ENCODE measurements at regions of chr3 and their contacts with region 1.

Region 1: GRCh38 chr3:30112902-30113484 is 493.4 kb upstream of the TGFBR2 start:
- DNase-seq: no peak
- H3K4me3 ChIP-seq: no peak overlapping the region
- H3K27ac ChIP-seq: no peak overlapping the region
- H3K4me1 ChIP-seq: no peaks in the 10 kb centered on the region
- H3K27me3 ChIP-seq: no peaks in the 10 kb centered on the region
- CTCF ChIP-seq: peak in 2 of 3 donors; percentile 10 to 53
- EP300 ChIP-seq: no peak
- POLR2A ChIP-seq: no peak

Region 2: DNA sequence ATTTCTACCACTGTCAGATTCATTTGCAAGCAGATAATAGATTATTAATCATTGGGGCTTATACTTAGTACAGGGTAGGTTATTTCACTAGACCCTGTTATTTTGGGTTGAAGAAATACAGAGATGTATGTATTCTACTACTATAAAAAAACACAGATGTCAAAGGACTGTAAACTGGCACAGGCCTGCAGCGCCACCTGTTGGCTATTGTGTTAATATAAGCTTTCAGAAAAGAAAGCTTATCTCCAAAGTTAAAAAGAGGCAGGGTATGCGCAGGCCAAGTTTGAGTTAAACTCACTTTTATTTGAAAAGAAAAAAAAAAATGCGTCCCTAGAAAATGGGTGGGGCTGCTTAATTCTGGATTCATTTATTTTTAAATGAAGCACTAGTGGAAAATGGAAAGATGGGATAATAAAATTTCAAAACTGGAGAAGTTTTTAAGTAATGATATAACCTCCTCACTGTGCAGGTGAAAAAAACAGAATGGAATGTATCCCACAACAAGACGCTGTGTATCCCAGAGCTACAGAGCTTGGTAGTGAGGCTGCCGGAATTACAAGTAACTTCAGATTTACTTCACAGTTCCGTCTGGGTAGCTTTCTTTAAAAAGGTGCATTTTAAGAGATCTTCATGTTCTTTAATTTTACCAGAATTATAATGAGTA is 86.2 kb after region 1 on chr3:
- intact Hi-C with region 1: loop called in 1 of 4 experiments (anchors 10 kb)
- DNase-seq: peak; percentile 35 to 76 (median 72)
- H3K4me3 ChIP-seq: no peak overlapping the region
- H3K27ac ChIP-seq: no peak overlapping the region
- H3K4me1 ChIP-seq: no peaks in the 10 kb centered on the region
- H3K27me3 ChIP-seq: no peaks in the 10 kb centered on the region
- CTCF ChIP-seq: peak; percentile 59 to 79 (median 65)
- EP300 ChIP-seq: no peak
- POLR2A ChIP-seq: no peak